Spleen (tissue), 13 donors: ENCODE measurements at regions of chr1 and their contacts with region 1.

Region 1: GRCh38 chr1:45490626-45491486 is at the start of gene TESK2:
- DNase-seq: peak; percentile 98
- H3K4me3 ChIP-seq: peak within 1 kb of the TSS; percentile 74 to 89 (median 79)
- H3K27ac ChIP-seq: peak within 1 kb of the TSS; percentile 67 to 92 (median 90)
- H3K4me1 ChIP-seq: peaks cover 6 to 46% (median 22%) of the 10 kb centered on the region in 6 donors
- H3K27me3 ChIP-seq: no peaks in the 10 kb centered on the region
- CTCF ChIP-seq: peak; percentile 30 to 82 (median 61)
- POLR2A ChIP-seq: peak; percentile 61 to 76 (median 76)
- total RNA-seq, gene TESK2: 7.3 to 11.5 (median 9.5) TPM

Region 2: DNA sequence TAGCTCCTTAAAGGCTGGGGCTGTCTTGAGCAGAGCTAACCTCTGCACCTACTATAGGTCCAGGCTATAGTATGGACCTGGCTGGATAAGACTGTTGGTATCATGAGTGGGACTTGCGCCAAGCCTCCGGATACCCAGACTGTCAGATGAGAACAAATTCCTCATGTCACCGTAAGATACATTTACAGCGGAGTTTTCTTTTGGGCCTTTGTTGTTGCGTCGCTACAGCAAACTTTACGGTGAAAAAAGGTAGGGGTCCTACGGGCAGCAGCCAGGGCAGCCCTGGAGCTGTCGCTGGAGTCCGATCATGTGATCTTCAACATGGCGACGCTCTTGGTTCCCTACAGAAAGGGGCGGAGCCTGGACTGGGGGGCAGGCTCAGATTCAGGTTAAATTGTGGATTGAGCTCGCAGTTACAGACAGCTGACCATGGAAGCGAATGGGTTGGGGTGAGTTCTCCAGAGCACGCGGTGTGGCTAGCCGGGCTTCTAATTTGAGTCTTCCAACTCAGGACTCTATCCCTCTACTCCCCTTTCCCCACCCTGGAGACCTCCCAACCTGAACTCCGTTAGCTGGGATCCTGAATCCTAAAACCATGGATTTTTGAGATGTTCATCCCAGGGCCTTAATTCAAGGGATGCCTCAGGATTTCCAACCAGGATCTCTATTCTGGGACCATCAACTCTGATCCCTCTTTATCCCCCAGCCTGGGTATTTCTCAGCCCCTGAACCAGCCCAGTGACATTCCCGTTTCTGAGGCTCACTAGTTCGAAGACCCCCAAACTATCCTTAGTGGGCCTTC is 478.8 kb before region 1 on chr1 and contains the start of gene UROD:
- intact Hi-C with region 1: loop called (anchors 5 kb)
- DNase-seq: peak; percentile 95
- H3K4me3 ChIP-seq: peak within 1 kb of the TSS; percentile 90 to 100 (median 100)
- H3K27ac ChIP-seq: peak within 1 kb of the TSS; percentile 67 to 92 (median 86)
- H3K4me1 ChIP-seq: peaks cover 30 to 63% (median 55%) of the 10 kb centered on the region in 6 donors
- H3K27me3 ChIP-seq: no peaks in the 10 kb centered on the region
- CTCF ChIP-seq: peak in 3 of 11 experiments; percentile 9 to 46 (median 28)
- POLR2A ChIP-seq: no peak
- total RNA-seq, gene UROD: 41.5 to 70.4 (median 65.4) TPM

Region 3: GRCh38 chr1:45303582-45304310 is 187.1 kb before region 1 on chr1:
- intact Hi-C with region 1: loop called (anchors 5 kb)
- DNase-seq: peak; percentile 100
- H3K4me3 ChIP-seq: peak overlapping the region; percentile 63 to 91 (median 80)
- H3K27ac ChIP-seq: peak overlapping the region; percentile 89 to 95 (median 94)
- H3K4me1 ChIP-seq: peaks cover 8 to 45% (median 23%) of the 10 kb centered on the region in 6 donors
- H3K27me3 ChIP-seq: no peaks in the 10 kb centered on the region
- CTCF ChIP-seq: peak; percentile 43 to 76 (median 71)
- POLR2A ChIP-seq: peak in 1 of 3 donors; percentile 24

Region 4: GRCh38 chr1:45326627-45327623 is 163.9 kb before region 1 on chr1 and contains the start of gene HPDL:
- intact Hi-C with region 1: no loop called
- DNase-seq: peak; percentile 89
- H3K4me3 ChIP-seq: peak within 1 kb of the TSS; percentile 45 to 82 (median 51)
- H3K27ac ChIP-seq: peak within 1 kb of the TSS in 4 of 8 donors; percentile 9 to 47 (median 18)
- H3K4me1 ChIP-seq: peaks cover 7 to 31% (median 25%) of the 10 kb centered on the region in 6 donors
- H3K27me3 ChIP-seq: peaks cover 0 to 8% (median 0%) of the 10 kb centered on the region in 7 donors
- CTCF ChIP-seq: no peak
- POLR2A ChIP-seq: no peak
- total RNA-seq, gene HPDL: 0.73 to 3.7 (median 1.3) TPM

Region 5: DNA sequence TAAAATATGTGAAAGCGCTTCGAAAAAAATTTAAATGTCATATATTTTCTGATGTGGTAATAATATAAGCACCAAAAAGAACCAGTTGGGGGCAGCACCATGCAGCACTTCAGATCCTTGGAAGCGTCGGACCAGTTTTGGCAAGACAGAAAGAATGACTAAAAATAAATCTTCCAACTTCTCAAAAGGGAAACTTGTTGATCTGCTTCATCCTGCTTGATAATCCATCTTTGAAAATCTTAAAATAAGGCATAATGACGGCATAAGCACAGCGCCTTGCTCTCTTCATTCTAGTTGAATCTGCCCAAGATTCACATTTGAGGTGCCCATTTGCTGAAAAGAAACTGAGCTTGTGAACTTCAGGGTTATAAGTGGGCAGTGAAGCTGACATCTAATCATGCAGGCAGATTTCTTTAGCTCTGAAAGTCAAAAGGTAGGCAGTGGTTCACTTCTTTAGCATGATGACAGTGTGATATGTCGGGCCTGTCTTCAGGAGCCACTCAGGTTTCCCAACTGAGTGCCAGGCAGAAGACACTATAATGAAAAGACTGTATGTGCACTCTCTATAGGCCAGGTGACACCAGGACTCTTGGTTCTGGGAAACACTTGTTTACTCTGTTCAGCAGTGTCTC is 130.9 kb before region 1 on chr1:
- intact Hi-C with region 1: loop called (anchors 5 kb)
- DNase-seq: no peak
- H3K4me3 ChIP-seq: peak overlapping the region in 1 of 8 donors; percentile 25
- H3K27ac ChIP-seq: peak overlapping the region; percentile 55 to 81 (median 74)
- H3K4me1 ChIP-seq: peaks cover 14 to 24% (median 20%) of the 10 kb centered on the region in 6 donors
- H3K27me3 ChIP-seq: no peaks in the 10 kb centered on the region
- CTCF ChIP-seq: peak; percentile 33 to 76 (median 64)
- POLR2A ChIP-seq: no peak

Region 6: DNA sequence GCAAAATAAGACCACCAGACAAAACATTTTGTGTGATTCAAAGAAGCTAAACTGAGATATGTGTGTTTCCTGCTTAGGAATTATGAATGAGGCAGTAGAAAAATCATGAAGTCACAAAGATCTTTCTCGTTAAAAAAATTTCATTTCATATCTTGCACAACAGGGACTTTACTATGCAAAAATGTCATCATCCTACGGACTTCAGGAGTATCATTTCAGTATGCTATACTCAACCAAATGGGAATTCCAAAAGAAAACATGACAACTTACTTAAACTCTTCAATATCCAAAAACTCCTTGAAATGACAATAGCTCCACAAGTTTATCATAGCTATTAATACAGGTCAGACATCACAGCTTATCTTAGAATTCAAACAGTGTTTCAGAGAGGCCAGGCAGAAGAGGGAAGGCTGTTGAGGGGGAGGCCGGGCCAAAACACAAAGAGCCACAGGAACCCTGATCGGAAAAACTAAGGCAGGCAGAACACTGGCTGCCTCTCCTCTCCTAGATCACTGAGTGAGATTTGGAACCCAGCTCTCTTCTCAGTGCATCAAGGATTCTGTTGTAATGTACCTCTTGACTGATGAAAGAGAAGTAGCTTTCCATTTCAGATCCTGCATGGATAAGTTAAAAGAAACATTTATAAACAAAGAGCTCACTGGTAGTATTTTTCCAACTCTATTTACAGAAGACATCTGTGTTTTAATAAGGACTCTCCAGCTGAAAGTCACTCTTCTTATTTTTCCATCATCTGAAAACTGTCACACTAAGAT is 66.8 kb before region 1 on chr1:
- intact Hi-C with region 1: no loop called
- DNase-seq: no peak
- H3K4me3 ChIP-seq: no peak overlapping the region
- H3K27ac ChIP-seq: no peak overlapping the region
- H3K4me1 ChIP-seq: peaks cover 0 to 1% (median 0%) of the 10 kb centered on the region in 6 donors
- H3K27me3 ChIP-seq: no peaks in the 10 kb centered on the region
- CTCF ChIP-seq: no peak
- POLR2A ChIP-seq: no peak